ENCODE measurements at regions of chr4 and their contacts with region 1.

Region 1: DNA sequence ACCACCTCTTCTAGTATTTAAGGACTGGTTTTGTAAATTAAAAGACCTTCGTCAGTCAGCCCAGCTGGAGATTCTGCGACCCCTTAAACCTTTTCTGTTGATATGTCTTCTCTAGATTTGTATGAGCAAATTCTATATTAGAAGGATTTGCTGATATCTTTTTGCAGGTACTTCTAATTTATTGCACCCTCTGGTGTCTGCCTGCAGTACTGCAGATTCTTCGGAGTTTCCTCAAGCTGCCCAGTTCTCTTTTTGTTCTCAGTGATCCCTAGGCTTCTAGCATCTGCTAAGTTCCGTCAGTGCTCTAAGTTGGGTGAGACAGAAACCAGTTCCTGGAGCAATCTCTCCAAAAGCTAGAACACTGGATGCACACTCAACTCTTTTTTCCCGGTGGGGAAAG is 545.2 kb downstream of the C4orf33 start:
- DNase-seq: peak; percentile 38 to 65
- H3K4me3 ChIP-seq: no peak overlapping the region
- H3K4me3 Mint-ChIP-seq: no peak overlapping the region
- H3K27ac Mint-ChIP-seq: no peak overlapping the region
- H3K4me1 ChIP-seq: no peaks in the 10 kb centered on the region
- H3K4me1 Mint-ChIP-seq: no peaks in the 10 kb centered on the region
- H3K27me3 ChIP-seq: no peaks in the 10 kb centered on the region
- H3K27me3 Mint-ChIP-seq: no peaks in the 10 kb centered on the region
- CTCF ChIP-seq: peak; percentile 75 to 79

Region 2: DNA sequence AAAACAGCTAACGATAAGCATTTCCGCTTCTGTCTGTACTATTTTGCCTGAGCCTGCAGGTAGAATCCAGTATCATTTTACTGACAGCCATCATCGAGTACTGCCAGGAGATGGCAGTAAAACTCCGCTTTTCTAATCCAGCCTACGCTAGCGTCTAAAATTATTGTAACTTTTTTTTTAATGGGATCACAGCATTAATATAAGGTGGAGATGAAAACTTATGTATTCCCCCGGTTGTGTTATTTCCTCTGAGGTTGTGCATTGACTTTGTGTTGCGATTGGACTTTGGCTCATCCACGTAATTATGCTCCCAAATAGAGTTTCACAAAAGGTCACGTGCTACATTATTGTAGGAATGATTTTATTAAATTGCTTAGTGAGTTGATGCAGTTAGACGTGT is 297.1 kb before region 1 on chr4:
- CTCF ChIA-PET with region 1: no interaction called
- POLR2A ChIA-PET with region 1: no interaction called
- intact Hi-C with region 1: loop called (anchors 1 kb)
- DNase-seq: peak in 1 of 2 experiments; percentile 24
- H3K4me3 ChIP-seq: no peak overlapping the region
- H3K4me3 Mint-ChIP-seq: no peak overlapping the region
- H3K27ac Mint-ChIP-seq: no peak overlapping the region
- H3K4me1 ChIP-seq: no peaks in the 10 kb centered on the region
- H3K4me1 Mint-ChIP-seq: no peaks in the 10 kb centered on the region
- H3K27me3 ChIP-seq: no peaks in the 10 kb centered on the region
- H3K27me3 Mint-ChIP-seq: peaks cover 2% of the 10 kb centered on the region
- CTCF ChIP-seq: peak; percentile 50 to 60

Region 3: GRCh38 chr4:129526814-129527213 is 114.4 kb before region 1 on chr4:
- CTCF ChIA-PET with region 1: interaction called, 4 read pairs
- POLR2A ChIA-PET with region 1: no interaction called
- intact Hi-C with region 1: loop called (anchors 1 kb)
- DNase-seq: no peak
- H3K4me3 ChIP-seq: no peak overlapping the region
- H3K4me3 Mint-ChIP-seq: no peak overlapping the region
- H3K27ac Mint-ChIP-seq: no peak overlapping the region
- H3K4me1 ChIP-seq: no peaks in the 10 kb centered on the region
- H3K4me1 Mint-ChIP-seq: no peaks in the 10 kb centered on the region
- H3K27me3 ChIP-seq: no peaks in the 10 kb centered on the region; the same call in 1 of the 2 replicates
- H3K27me3 Mint-ChIP-seq: peaks cover 11% of the 10 kb centered on the region
- CTCF ChIP-seq: peak in 1 of 2 experiments; percentile 12